BJ (cell line): ENCODE measurements at regions of chr21 and their contacts with region 1.

Region 1: GRCh38 chr21:16419188-16419921 is 689.6 kb downstream of the USP25 start:
- DNase-seq: no peak
- H3K4me3 ChIP-seq: no peak overlapping the region
- H3K27me3 ChIP-seq: no peaks in the 10 kb centered on the region
- CTCF ChIP-seq: no peak

Region 2: DNA sequence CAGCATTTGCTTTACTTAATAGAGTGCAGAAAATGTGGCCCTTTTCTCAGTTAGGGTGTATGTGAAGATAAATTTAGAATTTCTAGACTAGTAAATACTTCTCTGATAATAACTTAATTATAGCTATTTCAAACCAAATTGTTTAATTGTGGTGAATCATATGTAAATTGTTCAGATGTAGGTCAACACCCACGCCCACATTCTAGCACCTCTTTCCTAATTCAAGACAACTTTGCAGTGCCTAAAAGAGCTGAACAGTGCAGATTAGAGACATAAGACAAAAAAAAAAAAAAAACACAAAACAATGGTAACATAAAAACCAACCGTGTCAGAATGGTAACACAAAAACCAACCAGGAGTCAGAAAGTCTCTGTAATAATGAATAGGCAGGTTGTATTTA is 68.7 kb after region 1 on chr21:
- CTCF ChIA-PET with region 1: no interaction called
- POLR2A ChIA-PET with region 1: no interaction called
- DNase-seq: no peak
- H3K4me3 ChIP-seq: no peak overlapping the region
- H3K27me3 ChIP-seq: no peaks in the 10 kb centered on the region
- CTCF ChIP-seq: no peak

Region 3: GRCh38 chr21:16968436-16968835 is 549.1 kb after region 1 on chr21:
- CTCF ChIA-PET with region 1: no interaction called
- POLR2A ChIA-PET with region 1: interaction called, 14 read pairs
- DNase-seq: no peak
- H3K4me3 ChIP-seq: no peak overlapping the region
- H3K27me3 ChIP-seq: no peaks in the 10 kb centered on the region
- CTCF ChIP-seq: no peak